HCT116 (cell line): ENCODE measurements at regions of chr3 and their contacts with region 1.

Region 1: GRCh38 chr3:186259612-186260383 is 102.2 kb downstream of the DGKG start:
- DNase-seq: peak; percentile 75
- ATAC-seq: peak; percentile 100
- H3K4me3 ChIP-seq: no peak overlapping the region
- H3K27ac ChIP-seq: no peak overlapping the region
- H3K4me1 ChIP-seq: peaks cover 5 to 12% of the 10 kb centered on the region in 2 experiments; a peak in 3 of 4 replicates
- H3K27me3 ChIP-seq: no peaks in the 10 kb centered on the region
- CTCF ChIP-seq: peak; percentile 88 to 99 (median 96)
- POLR2A ChIP-seq: no peak
- RAD21 ChIP-seq: peak; percentile 90

Region 2: GRCh38 chr3:186400662-186401061 is 140.9 kb after region 1 on chr3:
- CTCF ChIA-PET with region 1: no interaction called
- POLR2A ChIA-PET with region 1: no interaction called
- RAD21 ChIA-PET with region 1: no interaction called
- intact Hi-C with region 1: no loop called
- DNase-seq: no peak
- ATAC-seq: no peak
- H3K4me3 ChIP-seq: no peak overlapping the region
- H3K27ac ChIP-seq: no peak overlapping the region
- H3K4me1 ChIP-seq: no peaks in the 10 kb centered on the region
- H3K27me3 ChIP-seq: 0 out of 2 replicates have a peak, but pooled peaks cover 11% of the 10 kb centered on the region
- CTCF ChIP-seq: no peak
- POLR2A ChIP-seq: no peak
- RAD21 ChIP-seq: no peak

Region 3: DNA sequence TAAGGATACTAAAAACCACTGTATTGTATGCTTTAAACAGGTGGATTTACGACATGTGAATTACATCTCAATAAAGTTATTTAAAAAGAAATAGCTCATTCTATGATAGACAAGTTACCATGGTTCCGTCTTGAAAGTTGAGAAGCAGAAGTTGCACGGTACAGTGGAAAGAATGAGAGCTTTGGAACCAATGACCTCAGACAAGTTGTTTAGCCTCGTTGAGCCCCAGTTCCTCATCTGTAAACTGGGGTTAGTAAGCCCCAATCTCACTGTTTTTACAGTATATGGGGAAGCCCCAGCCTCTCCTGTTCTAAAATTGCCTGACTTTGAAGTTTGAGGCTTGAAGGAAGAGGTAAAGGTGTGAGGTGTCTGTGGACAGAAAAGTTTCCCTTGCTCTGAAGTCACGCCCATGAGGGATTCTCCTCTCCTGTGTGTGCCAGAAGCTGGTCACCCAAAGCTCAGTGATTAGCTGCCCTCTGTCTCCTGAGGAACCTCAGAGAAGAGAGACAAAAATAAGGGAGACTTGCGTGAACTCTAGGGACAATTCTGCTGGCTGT is 274.4 kb after region 1 on chr3:
- CTCF ChIA-PET with region 1: interaction called, 17 read pairs
- POLR2A ChIA-PET with region 1: no interaction called
- RAD21 ChIA-PET with region 1: interaction called, 3 to 6 read pairs
- intact Hi-C with region 1: no loop called
- DNase-seq: no peak
- ATAC-seq: no peak
- H3K4me3 ChIP-seq: no peak overlapping the region
- H3K27ac ChIP-seq: no peak overlapping the region
- H3K4me1 ChIP-seq: no peaks in the 10 kb centered on the region
- H3K27me3 ChIP-seq: no peaks in the 10 kb centered on the region
- CTCF ChIP-seq: no peak
- POLR2A ChIP-seq: no peak
- RAD21 ChIP-seq: no peak

Region 4: GRCh38 chr3:186540221-186540834 is 280.5 kb after region 1 on chr3:
- CTCF ChIA-PET with region 1: interaction called, 86 read pairs
- POLR2A ChIA-PET with region 1: interaction called, 7 read pairs
- RAD21 ChIA-PET with region 1: interaction called, 3 to 6 read pairs
- intact Hi-C with region 1: loop called (anchors 1 kb)
- DNase-seq: peak; percentile 76
- ATAC-seq: peak; percentile 93
- H3K4me3 ChIP-seq: no peak overlapping the region
- H3K27ac ChIP-seq: no peak overlapping the region
- H3K4me1 ChIP-seq: peaks cover 9 to 17% of the 10 kb centered on the region in 2 experiments; a peak in 3 of 4 replicates
- H3K27me3 ChIP-seq: no peaks in the 10 kb centered on the region
- CTCF ChIP-seq: peak; percentile 50 to 83 (median 78)
- POLR2A ChIP-seq: no peak
- RAD21 ChIP-seq: peak; percentile 92

Region 5: DNA sequence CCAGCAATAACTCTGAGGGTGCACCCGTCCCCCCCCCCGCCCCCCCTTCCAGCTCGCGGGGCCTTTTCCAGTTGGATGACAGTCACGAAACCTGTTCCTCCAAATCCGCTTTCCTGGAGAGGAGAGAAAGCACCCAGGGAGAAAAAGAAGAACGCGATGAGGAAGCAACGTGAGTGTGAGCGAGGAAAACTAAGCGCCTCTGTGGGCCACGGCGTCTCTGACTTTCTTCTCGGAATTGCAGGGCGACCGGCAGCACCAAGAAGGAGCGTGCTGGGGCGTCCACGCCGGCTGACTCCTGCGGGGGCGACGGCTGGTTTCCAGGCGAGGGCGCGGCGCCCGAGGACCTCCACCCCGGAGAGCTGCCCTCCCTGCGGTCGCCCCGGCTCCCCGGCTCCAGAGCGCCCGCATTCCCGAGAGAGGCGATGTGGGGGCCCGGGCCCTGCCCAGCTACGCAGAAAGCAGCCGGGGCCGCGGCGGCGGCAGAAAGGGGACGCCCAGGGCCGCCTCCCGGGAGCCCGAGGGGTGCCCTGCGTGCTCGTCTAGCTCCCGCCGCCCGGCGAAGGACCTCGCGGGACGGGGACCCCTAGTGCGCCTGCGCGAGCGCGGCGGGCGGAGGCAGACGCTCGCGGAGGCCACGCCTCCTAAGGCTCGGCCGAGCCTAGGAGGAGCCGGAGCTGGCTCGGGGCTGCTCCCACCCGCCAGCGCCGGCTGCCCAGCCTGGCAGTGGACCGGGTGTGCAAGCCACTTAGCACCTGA is 567.4 kb after region 1 on chr3:
- CTCF ChIA-PET with region 1: no interaction called
- POLR2A ChIA-PET with region 1: no interaction called
- RAD21 ChIA-PET with region 1: no interaction called
- intact Hi-C with region 1: loop called (anchors 10 kb)
- DNase-seq: peak; percentile 49
- ATAC-seq: peak; percentile 91
- H3K4me3 ChIP-seq: peak overlapping the region; percentile 75 to 80
- H3K27ac ChIP-seq: peak overlapping the region; percentile 89
- H3K4me1 ChIP-seq: peaks cover 4 to 14% of the 10 kb centered on the region in 2 experiments; a peak in 2 of 4 replicates
- H3K27me3 ChIP-seq: peaks cover 26% of the 10 kb centered on the region
- CTCF ChIP-seq: no peak
- POLR2A ChIP-seq: peak; percentile 89
- RAD21 ChIP-seq: no peak